Right ventricle myocardium inferior (tissue), 1 donor: ENCODE measurements at regions of chr2 and their contacts with region 1.

Region 1: GRCh38 chr2:2291500-2292260 is 39.4 kb downstream of the MYT1L start:
- DNase-seq: peak; percentile 75
- ATAC-seq: peak; percentile 81

Region 2: GRCh38 chr2:1886405-1886992 is 405.2 kb before region 1 on chr2:
- intact Hi-C with region 1: loop called (anchors 2 kb)
- DNase-seq: peak; percentile 74
- ATAC-seq: no peak

Region 3: GRCh38 chr2:1910592-1911246 is 381.0 kb before region 1 on chr2:
- intact Hi-C with region 1: loop called (anchors 5 kb)
- DNase-seq: no peak
- ATAC-seq: no peak

Region 4: GRCh38 chr2:2121887-2122286 is 169.8 kb before region 1 on chr2:
- intact Hi-C with region 1: loop called (anchors 2 kb)
- DNase-seq: no peak
- ATAC-seq: no peak

Region 5: DNA sequence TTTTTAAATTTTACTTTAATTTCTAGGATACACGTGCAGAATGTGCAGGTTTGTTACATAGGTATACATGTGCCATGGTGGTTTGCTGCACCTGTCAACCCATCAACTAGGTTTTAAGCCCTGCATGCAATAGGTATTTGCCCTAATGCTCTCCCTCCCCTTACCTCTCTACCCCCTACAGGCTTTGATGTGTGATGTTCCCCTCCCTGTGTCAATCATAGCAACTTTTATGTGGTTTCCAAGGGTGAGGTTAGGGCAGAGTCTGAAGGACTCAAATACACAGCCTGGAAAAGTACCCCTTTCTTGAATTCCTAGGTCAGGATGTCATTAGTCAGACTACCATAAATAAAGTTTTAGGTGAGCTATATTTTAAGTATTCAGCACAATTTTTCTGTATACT is 70.5 kb after region 1 on chr2:
- intact Hi-C with region 1: no loop called
- DNase-seq: no peak
- ATAC-seq: no peak